Mammary epithelial cell (primary cell): ENCODE measurements at regions of chr21 and their contacts with region 1.

Region 1: DNA sequence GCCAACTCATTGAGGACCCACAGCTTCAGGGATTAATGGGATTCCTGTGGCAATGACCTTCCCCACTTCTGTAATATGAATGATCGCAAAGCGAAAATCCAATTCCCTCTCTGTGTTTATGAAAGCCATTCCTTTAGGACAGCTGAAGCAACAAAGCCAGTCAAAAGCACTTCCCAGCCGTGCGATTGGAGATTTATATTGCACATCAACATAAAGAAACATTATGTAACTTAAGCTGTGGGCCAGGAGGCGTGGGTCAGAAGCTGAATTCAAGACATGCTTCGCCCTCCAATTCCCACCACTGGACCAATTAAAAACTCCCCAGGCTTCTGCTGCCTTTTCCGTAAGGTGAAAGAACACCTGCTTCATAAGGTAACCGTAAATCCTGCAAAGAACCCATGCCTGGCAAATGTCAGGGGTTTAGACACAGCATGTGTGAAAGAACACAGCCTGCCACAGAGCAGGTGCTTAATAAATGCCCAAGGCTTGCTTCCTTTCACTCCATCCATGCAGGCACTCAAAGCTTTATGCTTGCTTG is 138.9 kb upstream of the SOD1 start:
- DNase-seq: no peak
- H3K4me3 ChIP-seq: no peak overlapping the region
- H3K27ac ChIP-seq: no peak overlapping the region
- H3K4me1 ChIP-seq: no peaks in the 10 kb centered on the region
- H3K27me3 ChIP-seq: no peaks in the 10 kb centered on the region
- CTCF ChIP-seq: no peak

Region 2: DNA sequence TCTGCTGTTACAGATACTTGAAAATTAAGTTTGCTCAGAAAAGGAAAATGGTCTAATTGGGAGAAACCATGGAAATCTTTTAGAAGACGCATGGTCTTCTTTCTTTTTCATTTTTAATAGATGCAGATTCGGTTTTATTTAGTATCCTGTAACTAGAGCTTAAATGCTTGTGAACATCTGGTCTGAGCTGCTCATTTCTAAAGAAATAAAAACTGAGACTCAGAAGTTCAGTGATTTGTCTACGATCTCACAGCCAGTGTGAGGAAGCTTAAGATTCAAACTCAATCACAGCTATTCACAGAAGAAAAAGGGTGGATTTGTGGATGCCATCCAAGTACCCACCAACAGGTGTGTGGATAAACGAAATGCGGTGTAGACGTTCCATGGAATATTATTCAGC is 96.6 kb before region 1 on chr21:
- CTCF ChIA-PET with region 1: no interaction called
- dilution Hi-C with region 1: loop called (anchors 5 kb)
- in situ Hi-C with region 1: no loop called
- intact Hi-C with region 1: no loop called
- DNase-seq: no peak
- H3K4me3 ChIP-seq: no peak overlapping the region
- H3K27ac ChIP-seq: no peak overlapping the region
- H3K4me1 ChIP-seq: no peaks in the 10 kb centered on the region
- H3K27me3 ChIP-seq: no peaks in the 10 kb centered on the region
- CTCF ChIP-seq: no peak

Region 3: GRCh38 chr21:31489014-31489413 is 31.6 kb before region 1 on chr21:
- CTCF ChIA-PET with region 1: no interaction called
- dilution Hi-C with region 1: loop called (anchors 5 kb)
- in situ Hi-C with region 1: no loop called
- intact Hi-C with region 1: no loop called
- DNase-seq: no peak
- H3K4me3 ChIP-seq: no peak overlapping the region
- H3K27ac ChIP-seq: no peak overlapping the region
- H3K4me1 ChIP-seq: no peaks in the 10 kb centered on the region
- H3K27me3 ChIP-seq: no peaks in the 10 kb centered on the region
- CTCF ChIP-seq: no peak

Region 4: DNA sequence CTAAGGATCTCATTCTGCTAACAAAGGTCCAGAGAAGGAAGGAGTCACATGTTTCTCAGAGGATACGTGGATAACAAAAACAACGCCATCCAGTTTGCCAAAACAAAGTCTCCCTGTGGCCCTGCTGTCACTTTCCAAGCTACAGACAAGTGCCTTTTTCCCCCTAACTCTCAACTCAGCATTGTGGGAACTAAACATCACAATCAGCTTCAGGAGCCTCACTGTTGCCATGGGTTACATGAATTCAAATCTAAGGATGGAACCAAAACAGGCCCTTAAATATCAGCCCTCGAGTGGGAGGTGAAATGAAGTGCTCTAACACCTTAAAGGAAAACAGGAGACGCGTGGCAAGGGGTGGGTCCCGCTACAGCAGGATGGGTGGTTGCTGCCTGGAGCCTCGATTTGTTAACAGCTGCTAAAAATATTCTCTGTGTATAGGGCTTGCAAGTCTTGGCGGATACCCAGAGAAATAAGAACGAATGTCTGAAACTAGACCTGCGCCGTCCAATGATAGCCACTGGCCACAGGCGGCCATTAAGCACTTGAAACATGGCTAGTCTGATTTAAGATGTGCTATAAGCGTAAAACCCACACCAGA is 72.4 kb after region 1 on chr21:
- CTCF ChIA-PET with region 1: no interaction called
- dilution Hi-C with region 1: no loop called
- in situ Hi-C with region 1: no loop called
- intact Hi-C with region 1: no loop called
- DNase-seq: no peak
- H3K4me3 ChIP-seq: no peak overlapping the region
- H3K27ac ChIP-seq: no peak overlapping the region
- H3K4me1 ChIP-seq: no peaks in the 10 kb centered on the region
- H3K27me3 ChIP-seq: peaks cover 3% of the 10 kb centered on the region
- CTCF ChIP-seq: no peak

Region 5: GRCh38 chr21:31988492-31989290 is 468.1 kb after region 1 on chr21:
- CTCF ChIA-PET with region 1: no interaction called
- dilution Hi-C with region 1: no loop called
- in situ Hi-C with region 1: no loop called
- intact Hi-C with region 1: no loop called
- DNase-seq: no peak
- H3K4me3 ChIP-seq: no peak overlapping the region
- H3K27ac ChIP-seq: no peak overlapping the region
- H3K4me1 ChIP-seq: no peaks in the 10 kb centered on the region
- H3K27me3 ChIP-seq: no peaks in the 10 kb centered on the region
- CTCF ChIP-seq: no peak